Mammary epithelial cell (primary cell): ENCODE measurements at regions of chr6 and their contacts with region 1.

Region 1: DNA sequence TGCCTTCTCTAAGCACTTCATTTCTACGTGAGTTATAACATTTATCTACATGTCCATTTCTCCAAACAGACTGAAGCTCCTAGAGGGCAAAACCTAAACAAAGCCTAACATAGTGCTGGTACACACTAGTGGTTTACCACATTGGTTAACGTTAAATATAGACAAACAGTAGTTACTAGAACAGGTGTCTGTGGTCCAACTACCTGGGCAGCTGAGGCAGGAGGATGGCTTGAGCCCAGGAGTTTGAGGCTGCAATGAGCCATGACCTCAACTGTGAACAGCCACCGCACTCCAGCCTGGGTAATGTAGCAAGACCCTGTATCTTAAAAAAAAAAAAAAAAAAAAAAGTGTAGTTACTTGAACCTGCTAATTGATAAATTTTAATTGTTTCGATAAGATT is 26.5 kb downstream of the PTPRK start:
- DNase-seq: no peak
- H3K4me3 ChIP-seq: no peak overlapping the region
- H3K27ac ChIP-seq: no peak overlapping the region
- H3K4me1 ChIP-seq: peaks cover 22% of the 10 kb centered on the region
- H3K27me3 ChIP-seq: no peaks in the 10 kb centered on the region
- CTCF ChIP-seq: no peak

Region 2: GRCh38 chr6:127951172-127951917 is 542.5 kb before region 1 on chr6:
- CTCF ChIA-PET with region 1: interaction called, 24 read pairs
- dilution Hi-C with region 1: no loop called
- in situ Hi-C with region 1: no loop called
- intact Hi-C with region 1: no loop called
- DNase-seq: no peak
- H3K4me3 ChIP-seq: no peak overlapping the region
- H3K27ac ChIP-seq: no peak overlapping the region
- H3K4me1 ChIP-seq: no peaks in the 10 kb centered on the region
- H3K27me3 ChIP-seq: peaks cover 2% of the 10 kb centered on the region
- CTCF ChIP-seq: no peak

Region 3: DNA sequence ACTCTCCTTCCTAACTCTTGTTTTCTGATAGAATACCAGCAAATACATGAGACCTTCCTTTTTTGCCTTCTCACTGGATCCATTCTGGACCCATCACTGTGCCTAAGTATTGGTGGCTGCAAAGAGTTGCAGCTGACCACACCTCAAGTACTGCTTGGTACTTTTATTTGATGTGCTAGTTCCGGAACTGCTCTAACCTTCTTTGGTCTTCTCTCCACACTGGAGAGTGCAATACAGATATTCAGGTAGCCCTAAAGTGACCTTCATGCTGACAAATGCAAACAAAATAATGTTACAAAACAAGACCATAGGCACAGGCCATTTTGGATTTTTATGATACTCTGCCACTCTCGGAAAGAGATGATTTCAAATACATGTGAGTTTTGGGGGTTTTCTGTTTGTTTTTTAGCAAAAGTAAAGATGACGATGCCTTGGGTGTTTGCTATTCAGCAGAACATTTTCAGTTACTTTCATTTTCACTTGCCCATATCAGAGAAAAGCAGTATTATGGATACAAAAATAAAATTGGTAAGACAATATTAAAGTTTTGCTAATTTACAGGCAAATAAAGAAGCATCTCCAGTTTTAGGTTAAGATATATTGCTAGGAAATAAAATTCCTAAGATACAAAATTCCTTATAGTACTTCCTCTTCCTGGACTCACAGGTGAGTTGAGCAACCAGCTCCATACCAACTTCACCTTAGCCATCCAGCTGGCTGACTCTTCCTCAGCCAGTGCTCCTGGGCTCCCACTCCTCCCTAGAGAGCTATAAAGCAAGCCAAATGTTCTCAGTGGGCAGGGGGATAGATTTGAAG is 15.4 kb before region 1 on chr6:
- CTCF ChIA-PET with region 1: no interaction called
- dilution Hi-C with region 1: no loop called
- in situ Hi-C with region 1: no loop called
- intact Hi-C with region 1: no loop called
- DNase-seq: no peak
- H3K4me3 ChIP-seq: no peak overlapping the region
- H3K27ac ChIP-seq: no peak overlapping the region
- H3K4me1 ChIP-seq: peaks cover 25% of the 10 kb centered on the region
- H3K27me3 ChIP-seq: no peaks in the 10 kb centered on the region
- CTCF ChIP-seq: no peak

Region 4: DNA sequence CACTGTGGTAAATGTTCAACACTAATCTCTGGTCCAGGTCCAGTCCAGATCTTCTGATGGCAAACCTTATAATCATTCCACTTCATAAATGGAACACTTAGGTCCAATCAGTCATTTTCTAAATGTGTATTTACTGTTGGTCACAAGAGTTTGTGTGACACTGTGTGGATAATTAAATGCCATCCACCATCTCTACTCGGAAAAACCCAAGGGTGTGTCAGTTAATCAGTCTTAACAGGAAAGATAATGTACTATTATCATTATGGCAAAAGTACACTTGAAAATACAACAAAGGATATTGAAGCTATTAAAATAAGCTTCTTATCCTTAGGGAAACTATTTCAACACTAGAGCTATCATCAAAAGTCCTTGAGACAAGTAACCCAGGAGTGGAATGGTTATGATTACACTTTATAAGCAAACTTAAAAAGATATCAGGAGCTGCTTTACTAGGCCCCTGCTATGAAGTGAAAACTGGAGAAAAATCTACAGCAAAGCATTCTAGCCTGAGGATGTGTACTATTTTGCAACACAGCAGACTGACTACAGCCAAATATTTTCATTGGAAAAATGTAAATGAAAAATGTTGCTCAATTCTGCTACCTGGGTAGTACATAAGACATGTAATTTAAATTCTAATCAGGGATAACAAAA is 616.9 kb after region 1 on chr6:
- CTCF ChIA-PET with region 1: no interaction called
- dilution Hi-C with region 1: no loop called
- in situ Hi-C with region 1: no loop called
- intact Hi-C with region 1: no loop called
- DNase-seq: no peak
- H3K4me3 ChIP-seq: no peak overlapping the region
- H3K27ac ChIP-seq: no peak overlapping the region
- H3K4me1 ChIP-seq: no peaks in the 10 kb centered on the region
- H3K27me3 ChIP-seq: peaks cover 4% of the 10 kb centered on the region
- CTCF ChIP-seq: no peak